Caco-2 (cell line): ENCODE measurements at regions of chr3 and their contacts with region 1.

Region 1: GRCh38 chr3:138594150-138594934 is at the start of gene CEP70:
- DNase-seq: peak; percentile 96
- H3K4me3 ChIP-seq: peak within 1 kb of the TSS; percentile 62
- H3K4me3 Mint-ChIP-seq: peak within 1 kb of the TSS; percentile 98
- H3K27ac Mint-ChIP-seq: peak within 1 kb of the TSS; percentile 95
- H3K4me1 ChIP-seq: peaks cover 6% of the 10 kb centered on the region; the same call in 1 of the 2 replicates
- H3K4me1 Mint-ChIP-seq: no peaks in the 10 kb centered on the region
- H3K27me3 ChIP-seq: no peaks in the 10 kb centered on the region
- H3K27me3 Mint-ChIP-seq: no peaks in the 10 kb centered on the region
- CTCF ChIP-seq: peak; percentile 42 to 86
- total RNA-seq, gene CEP70: 18.5 and 25.0 TPM in 2 replicates

Region 2: DNA sequence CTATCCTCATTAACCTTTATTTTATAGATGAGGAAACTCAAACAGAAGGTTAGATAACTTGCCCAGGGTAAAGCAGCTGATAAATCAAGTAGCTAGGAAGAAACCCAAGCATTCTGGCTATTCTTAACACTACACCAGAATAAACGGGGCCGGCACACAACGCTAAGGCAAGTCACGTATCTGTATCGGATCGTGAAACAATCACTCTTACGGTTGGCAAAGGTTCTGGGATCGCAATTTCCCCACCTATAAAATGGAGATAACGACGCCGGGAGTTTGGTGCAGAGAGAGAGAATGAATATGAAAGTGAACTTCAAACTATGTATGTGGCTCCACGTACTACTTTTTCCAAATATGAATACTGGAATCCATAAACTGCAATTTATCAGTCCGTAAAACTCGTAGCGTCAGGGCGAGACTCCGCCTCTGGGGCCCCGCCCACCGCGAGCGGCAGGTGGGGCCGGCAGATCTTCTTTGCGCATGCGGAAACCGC is 407.5 kb before region 1 on chr3:
- CTCF ChIA-PET with region 1: no interaction called
- POLR2A ChIA-PET with region 1: interaction called, 3 read pairs
- intact Hi-C with region 1: loop called (anchors 10 kb)
- DNase-seq: peak; percentile 85 to 87
- H3K4me3 ChIP-seq: peak overlapping the region; percentile 65
- H3K4me3 Mint-ChIP-seq: peak overlapping the region; percentile 95
- H3K27ac Mint-ChIP-seq: peak overlapping the region; percentile 98
- H3K4me1 ChIP-seq: peaks cover 15% of the 10 kb centered on the region; the same call in 1 of the 2 replicates
- H3K4me1 Mint-ChIP-seq: peaks cover 15% of the 10 kb centered on the region
- H3K27me3 ChIP-seq: no peaks in the 10 kb centered on the region
- H3K27me3 Mint-ChIP-seq: peaks cover 4% of the 10 kb centered on the region
- CTCF ChIP-seq: no peak

Region 3: GRCh38 chr3:138567401-138567800 is 26.9 kb before region 1 on chr3:
- CTCF ChIA-PET with region 1: no interaction called
- POLR2A ChIA-PET with region 1: no interaction called
- intact Hi-C with region 1: loop called (anchors 1 kb)
- DNase-seq: peak in 1 of 2 experiments; percentile 20
- H3K4me3 ChIP-seq: no peak overlapping the region
- H3K4me3 Mint-ChIP-seq: no peak overlapping the region
- H3K27ac Mint-ChIP-seq: no peak overlapping the region
- H3K4me1 ChIP-seq: peaks cover 11% of the 10 kb centered on the region; the same call in 1 of the 2 replicates
- H3K4me1 Mint-ChIP-seq: peaks cover 13% of the 10 kb centered on the region
- H3K27me3 ChIP-seq: no peaks in the 10 kb centered on the region
- H3K27me3 Mint-ChIP-seq: no peaks in the 10 kb centered on the region
- CTCF ChIP-seq: peak; percentile 12 to 52

Region 4: DNA sequence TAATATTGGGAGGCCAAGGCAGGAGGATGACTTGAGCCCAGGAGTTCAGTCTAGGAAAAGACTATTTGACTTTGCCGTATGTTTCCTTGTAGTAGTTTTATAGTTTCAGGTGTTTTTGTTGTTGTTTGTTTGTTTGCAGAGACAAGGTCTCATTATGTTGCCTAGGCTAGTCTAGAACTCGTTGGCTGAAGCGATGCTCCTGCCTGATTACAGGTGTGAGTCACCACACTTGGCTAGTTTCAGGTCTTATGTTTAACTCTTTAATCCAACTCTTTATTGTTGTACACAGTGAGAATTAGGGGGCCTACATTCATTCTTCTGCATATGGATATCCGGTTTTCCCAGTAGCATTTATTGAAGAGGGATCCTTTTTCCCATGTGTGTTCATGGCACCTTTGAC is 46.2 kb after region 1 on chr3:
- CTCF ChIA-PET with region 1: no interaction called
- POLR2A ChIA-PET with region 1: no interaction called
- intact Hi-C with region 1: no loop called
- DNase-seq: no peak
- H3K4me3 ChIP-seq: no peak overlapping the region
- H3K4me3 Mint-ChIP-seq: no peak overlapping the region
- H3K27ac Mint-ChIP-seq: no peak overlapping the region
- H3K4me1 ChIP-seq: no peaks in the 10 kb centered on the region
- H3K4me1 Mint-ChIP-seq: no peaks in the 10 kb centered on the region
- H3K27me3 ChIP-seq: no peaks in the 10 kb centered on the region
- H3K27me3 Mint-ChIP-seq: no peaks in the 10 kb centered on the region
- CTCF ChIP-seq: no peak

Region 5: DNA sequence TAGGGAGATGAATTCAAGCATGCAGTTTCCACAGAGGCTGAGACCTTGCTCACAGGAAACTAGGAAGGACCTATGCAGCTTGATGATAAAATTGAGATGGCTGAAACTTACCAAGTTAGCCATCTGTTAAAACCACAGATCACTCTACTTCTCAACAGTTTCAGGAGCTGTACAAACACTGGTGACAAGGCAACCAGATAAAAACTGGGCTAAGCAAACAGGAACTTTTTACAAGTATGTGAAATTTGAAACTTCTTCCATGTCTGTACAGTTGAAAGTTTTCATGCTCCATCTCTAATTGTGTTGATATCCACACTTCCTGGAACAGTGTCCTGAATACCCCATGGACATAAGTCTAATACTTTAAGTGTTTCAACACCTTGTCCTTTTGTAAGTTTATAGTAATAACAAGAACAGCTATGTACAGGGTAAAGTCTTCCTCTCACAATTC is 92.5 kb after region 1 on chr3:
- CTCF ChIA-PET with region 1: interaction called, 3 read pairs
- POLR2A ChIA-PET with region 1: no interaction called
- intact Hi-C with region 1: loop called (anchors 2 kb)
- DNase-seq: peak in 1 of 2 experiments; percentile 46
- H3K4me3 ChIP-seq: no peak overlapping the region
- H3K4me3 Mint-ChIP-seq: no peak overlapping the region
- H3K27ac Mint-ChIP-seq: no peak overlapping the region
- H3K4me1 ChIP-seq: peaks cover 22% of the 10 kb centered on the region
- H3K4me1 Mint-ChIP-seq: peaks cover 19% of the 10 kb centered on the region
- H3K27me3 ChIP-seq: no peaks in the 10 kb centered on the region
- H3K27me3 Mint-ChIP-seq: no peaks in the 10 kb centered on the region
- CTCF ChIP-seq: no peak

Region 6: GRCh38 chr3:138915503-138916498 is 321.5 kb after region 1 on chr3:
- CTCF ChIA-PET with region 1: interaction called, 71 read pairs
- POLR2A ChIA-PET with region 1: interaction called, 14 read pairs
- intact Hi-C with region 1: loop called (anchors 1 kb)
- DNase-seq: peak; percentile 90 to 94
- H3K4me3 ChIP-seq: peak overlapping the region; percentile 62
- H3K4me3 Mint-ChIP-seq: peak overlapping the region; percentile 73
- H3K27ac Mint-ChIP-seq: peak overlapping the region; percentile 30
- H3K4me1 ChIP-seq: 0 out of 2 replicates have a peak, but pooled peaks cover 3% of the 10 kb centered on the region
- H3K4me1 Mint-ChIP-seq: no peaks in the 10 kb centered on the region
- H3K27me3 ChIP-seq: no peaks in the 10 kb centered on the region
- H3K27me3 Mint-ChIP-seq: no peaks in the 10 kb centered on the region
- CTCF ChIP-seq: peak; percentile 84 to 93

Region 7: DNA sequence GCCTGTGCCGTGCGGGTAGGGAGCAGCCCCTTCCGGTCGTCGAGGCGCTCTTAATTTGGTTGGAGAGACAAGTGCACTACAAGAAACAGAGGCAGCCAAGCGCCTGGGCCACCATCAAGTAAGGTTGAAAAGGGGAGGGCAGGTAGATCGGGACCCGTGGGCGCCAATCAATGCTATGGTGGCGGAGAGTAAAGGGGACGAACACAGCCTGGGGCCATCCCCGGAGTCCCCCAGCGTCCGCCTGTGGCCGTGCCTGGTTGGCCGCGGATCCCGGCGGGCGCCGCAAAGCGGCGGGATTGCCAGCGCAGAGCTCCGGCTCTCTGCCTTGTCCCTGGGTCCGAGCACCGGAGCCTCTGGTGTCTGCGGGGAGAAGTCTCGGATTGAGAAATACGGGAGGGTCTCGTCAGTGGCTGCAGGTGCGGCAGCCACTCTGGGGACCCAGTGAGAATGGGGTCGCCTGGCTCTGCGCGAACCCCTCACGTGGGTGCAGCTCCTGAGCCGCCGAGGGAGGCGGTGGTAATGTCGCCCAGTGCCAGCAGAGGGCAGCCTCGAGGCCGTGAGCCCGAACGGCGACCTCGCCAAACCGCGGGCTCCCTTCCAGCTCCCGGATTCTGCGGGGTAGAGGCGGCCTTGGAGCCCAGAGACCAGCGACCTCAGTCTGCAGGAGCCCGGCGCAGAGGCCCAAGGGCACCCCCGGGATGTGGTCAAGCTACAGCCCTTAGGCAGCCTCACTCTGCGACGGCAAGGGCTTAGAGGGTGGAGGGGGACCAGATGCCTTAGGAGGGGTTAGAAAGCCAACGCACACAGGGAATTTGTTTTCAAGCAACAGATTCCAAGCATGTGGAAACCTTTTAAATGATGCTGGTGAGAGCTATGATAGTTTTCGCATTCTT is 341.8 kb after region 1 on chr3:
- CTCF ChIA-PET with region 1: interaction called, 17 read pairs
- POLR2A ChIA-PET with region 1: no interaction called
- intact Hi-C with region 1: no loop called
- DNase-seq: peak; percentile 66 to 88
- H3K4me3 ChIP-seq: peak overlapping the region; percentile 60
- H3K4me3 Mint-ChIP-seq: peak overlapping the region; percentile 92
- H3K27ac Mint-ChIP-seq: peak overlapping the region; percentile 46
- H3K4me1 ChIP-seq: no peaks in the 10 kb centered on the region
- H3K4me1 Mint-ChIP-seq: no peaks in the 10 kb centered on the region
- H3K27me3 ChIP-seq: no peaks in the 10 kb centered on the region
- H3K27me3 Mint-ChIP-seq: no peaks in the 10 kb centered on the region
- CTCF ChIP-seq: peak; percentile 82 to 92